Adrenal gland (tissue), 19 donors: ENCODE measurements at regions of chr1 and their contacts with region 1.

Region 1: GRCh38 chr1:60765204-60765603 is 317.2 kb upstream of the NFIA start:
- DNase-seq: peak in 5 of 7 donors; percentile 19 to 39 (median 24)
- H3K4me3 ChIP-seq: no peak overlapping the region
- H3K27ac ChIP-seq: no peak overlapping the region
- H3K4me1 ChIP-seq: no peaks in the 10 kb centered on the region
- H3K27me3 ChIP-seq: no peaks in the 10 kb centered on the region
- CTCF ChIP-seq: peak; percentile 19 to 54 (median 44)
- POLR2A ChIP-seq: no peak

Region 2: GRCh38 chr1:60281360-60281932 is 483.8 kb before region 1 on chr1:
- intact Hi-C with region 1: loop called in 1 of 2 experiments (anchors 10 kb)
- DNase-seq: peak; percentile 52 to 89 (median 63)
- H3K4me3 ChIP-seq: no peak overlapping the region
- H3K27ac ChIP-seq: no peak overlapping the region
- H3K4me1 ChIP-seq: peaks cover 4 to 35% of the 10 kb centered on the region in 2 donors
- H3K27me3 ChIP-seq: no peaks in the 10 kb centered on the region
- CTCF ChIP-seq: peak; percentile 77 to 95 (median 86)
- POLR2A ChIP-seq: no peak

Region 3: GRCh38 chr1:60727552-60727951 is 37.7 kb before region 1 on chr1:
- intact Hi-C with region 1: no loop called
- DNase-seq: no peak
- H3K4me3 ChIP-seq: no peak overlapping the region
- H3K27ac ChIP-seq: no peak overlapping the region
- H3K4me1 ChIP-seq: no peaks in the 10 kb centered on the region
- H3K27me3 ChIP-seq: no peaks in the 10 kb centered on the region
- CTCF ChIP-seq: no peak
- POLR2A ChIP-seq: no peak

Region 4: GRCh38 chr1:60833173-60833572 is 68.0 kb after region 1 on chr1:
- intact Hi-C with region 1: no loop called
- DNase-seq: no peak
- H3K4me3 ChIP-seq: no peak overlapping the region
- H3K27ac ChIP-seq: no peak overlapping the region
- H3K4me1 ChIP-seq: no peaks in the 10 kb centered on the region
- H3K27me3 ChIP-seq: no peaks in the 10 kb centered on the region
- CTCF ChIP-seq: no peak
- POLR2A ChIP-seq: no peak